Mammary epithelial cell (primary cell): ENCODE measurements at regions of chr4 and their contacts with region 1.

Region 1: GRCh38 chr4:762211-763190 is 56.9 kb downstream of the PCGF3 start:
- DNase-seq: no peak
- H3K4me3 ChIP-seq: no peak overlapping the region
- H3K27ac ChIP-seq: no peak overlapping the region
- H3K4me1 ChIP-seq: peaks cover 14% of the 10 kb centered on the region
- H3K27me3 ChIP-seq: no peaks in the 10 kb centered on the region
- CTCF ChIP-seq: peak; percentile 20 to 22

Region 2: DNA sequence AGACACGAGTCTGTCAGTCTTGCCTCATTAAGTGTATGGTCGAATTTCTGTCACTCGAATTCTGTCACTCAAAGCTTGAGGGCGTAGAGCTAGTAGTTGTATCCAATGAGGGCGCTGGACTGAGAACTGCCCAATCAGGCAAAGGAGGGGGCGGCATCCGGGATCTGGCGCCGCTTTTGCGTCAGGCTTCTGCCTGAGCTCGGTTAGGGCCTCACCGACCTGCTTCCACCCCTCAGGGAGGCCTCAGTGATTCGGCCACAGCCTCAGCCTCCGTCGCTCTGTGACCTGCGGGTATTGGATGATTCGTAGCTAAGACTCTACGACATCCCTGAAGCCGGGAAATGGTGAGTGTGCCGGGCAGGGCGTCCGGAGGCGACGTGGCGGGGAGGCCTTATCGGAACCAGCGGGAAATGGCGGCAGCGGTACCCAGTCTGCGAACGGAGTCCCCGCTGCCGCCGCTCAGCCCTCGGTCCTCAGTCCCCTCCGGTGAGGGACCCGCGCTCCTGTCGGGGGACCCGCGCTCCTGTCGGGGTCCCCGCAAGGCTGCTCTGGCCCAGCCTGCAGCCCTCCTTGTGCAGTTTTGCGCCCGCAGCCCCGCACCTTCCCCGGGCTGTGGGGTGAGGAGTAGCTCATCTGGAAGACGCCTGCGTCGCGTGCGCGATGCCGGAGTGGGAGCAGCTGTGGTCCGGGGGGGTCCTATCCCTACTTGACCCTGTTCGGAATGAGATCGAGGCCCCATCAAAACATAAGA is 549.9 kb before region 1 on chr4:
- CTCF ChIA-PET with region 1: no interaction called
- dilution Hi-C with region 1: no loop called
- in situ Hi-C with region 1: no loop called
- intact Hi-C with region 1: no loop called
- DNase-seq: peak; percentile 77
- H3K4me3 ChIP-seq: peak overlapping the region in 2 of 3 experiments; percentile 36 to 46
- H3K27ac ChIP-seq: no peak overlapping the region
- H3K4me1 ChIP-seq: no peaks in the 10 kb centered on the region
- H3K27me3 ChIP-seq: no peaks in the 10 kb centered on the region
- CTCF ChIP-seq: no peak

Region 3: GRCh38 chr4:242121-242848 is 520.2 kb before region 1 on chr4:
- CTCF ChIA-PET with region 1: no interaction called
- dilution Hi-C with region 1: no loop called
- in situ Hi-C with region 1: no loop called
- intact Hi-C with region 1: loop called (anchors 5 kb)
- DNase-seq: peak; percentile 70
- H3K4me3 ChIP-seq: peak overlapping the region; percentile 22 to 47 (median 44)
- H3K27ac ChIP-seq: no peak overlapping the region
- H3K4me1 ChIP-seq: no peaks in the 10 kb centered on the region
- H3K27me3 ChIP-seq: no peaks in the 10 kb centered on the region
- CTCF ChIP-seq: peak; percentile 51 to 77

Region 4: GRCh38 chr4:602559-602942 is 159.9 kb before region 1 on chr4:
- CTCF ChIA-PET with region 1: no interaction called
- dilution Hi-C with region 1: no loop called
- in situ Hi-C with region 1: no loop called
- intact Hi-C with region 1: loop called (anchors 5 kb)
- DNase-seq: peak; percentile 60
- H3K4me3 ChIP-seq: no peak overlapping the region
- H3K27ac ChIP-seq: no peak overlapping the region
- H3K4me1 ChIP-seq: no peaks in the 10 kb centered on the region
- H3K27me3 ChIP-seq: no peaks in the 10 kb centered on the region
- CTCF ChIP-seq: peak; percentile 82 to 90

Region 5: DNA sequence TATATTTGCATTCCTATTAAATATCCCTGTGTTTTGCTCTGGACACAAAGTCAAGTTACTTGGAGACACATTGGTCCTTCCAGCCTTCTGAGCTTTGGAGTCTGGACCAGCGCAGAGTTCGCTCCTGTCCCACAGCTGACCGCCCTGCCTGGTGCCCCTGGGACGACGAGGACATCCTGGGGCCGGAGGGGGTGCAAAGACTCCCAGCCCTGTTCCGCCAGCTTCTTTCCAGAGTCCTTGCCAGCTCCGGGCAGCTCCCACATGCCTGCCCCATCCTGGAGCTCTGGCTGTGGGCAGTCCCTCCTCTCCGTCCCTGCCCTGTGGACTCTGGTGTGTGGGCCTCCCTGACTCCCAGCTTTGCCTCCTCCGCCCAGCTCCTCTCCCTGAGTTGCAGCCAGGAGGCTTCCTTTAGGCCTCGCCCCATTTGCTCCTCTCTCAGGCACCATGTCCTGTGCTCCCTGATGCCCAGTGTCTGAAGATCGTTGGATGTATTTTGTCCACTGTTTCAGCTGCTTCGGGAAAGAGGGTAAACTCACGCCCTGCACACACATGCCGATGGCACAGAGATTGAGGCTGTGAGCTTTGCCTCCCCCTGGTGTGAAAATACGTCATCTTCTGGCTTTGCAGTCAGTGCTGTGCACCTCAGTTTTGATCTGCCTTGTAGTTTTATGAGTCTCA is 61.8 kb before region 1 on chr4:
- CTCF ChIA-PET with region 1: no interaction called
- dilution Hi-C with region 1: loop called (anchors 5 kb)
- in situ Hi-C with region 1: no loop called
- intact Hi-C with region 1: no loop called
- DNase-seq: no peak
- H3K4me3 ChIP-seq: no peak overlapping the region
- H3K27ac ChIP-seq: no peak overlapping the region
- H3K4me1 ChIP-seq: peaks cover 4% of the 10 kb centered on the region
- H3K27me3 ChIP-seq: no peaks in the 10 kb centered on the region
- CTCF ChIP-seq: no peak

Region 6: GRCh38 chr4:721261-722168 is 41.0 kb before region 1 on chr4:
- CTCF ChIA-PET with region 1: no interaction called
- dilution Hi-C with region 1: no loop called
- in situ Hi-C with region 1: no loop called
- intact Hi-C with region 1: loop called (anchors 2 kb)
- DNase-seq: peak; percentile 62
- H3K4me3 ChIP-seq: no peak overlapping the region
- H3K27ac ChIP-seq: no peak overlapping the region
- H3K4me1 ChIP-seq: peaks cover 13% of the 10 kb centered on the region
- H3K27me3 ChIP-seq: no peaks in the 10 kb centered on the region
- CTCF ChIP-seq: no peak

Region 7: GRCh38 chr4:891747-892146 is 129.2 kb after region 1 on chr4:
- CTCF ChIA-PET with region 1: no interaction called
- dilution Hi-C with region 1: loop called (anchors 10 kb)
- in situ Hi-C with region 1: no loop called
- intact Hi-C with region 1: no loop called
- DNase-seq: no peak
- H3K4me3 ChIP-seq: no peak overlapping the region
- H3K27ac ChIP-seq: no peak overlapping the region
- H3K4me1 ChIP-seq: no peaks in the 10 kb centered on the region
- H3K27me3 ChIP-seq: no peaks in the 10 kb centered on the region
- CTCF ChIP-seq: peak in 1 of 2 donors; percentile 28

Region 8: GRCh38 chr4:986879-987623 is 224.6 kb after region 1 on chr4 and contains the start of gene IDUA:
- CTCF ChIA-PET with region 1: no interaction called
- dilution Hi-C with region 1: no loop called
- in situ Hi-C with region 1: no loop called
- intact Hi-C with region 1: loop called (anchors 2 kb)
- DNase-seq: peak; percentile 48
- H3K4me3 ChIP-seq: peak within 1 kb of the TSS; percentile 65 to 77 (median 66)
- H3K27ac ChIP-seq: peak within 1 kb of the TSS; percentile 24
- H3K4me1 ChIP-seq: peaks cover 26% of the 10 kb centered on the region
- H3K27me3 ChIP-seq: no peaks in the 10 kb centered on the region
- CTCF ChIP-seq: peak; percentile 2 to 54
- total RNA-seq, gene IDUA: 17.8 to 30.8 TPM